K562 (cell line): ENCODE measurements at regions of chr1 and their contacts with region 1.

Region 1: GRCh38 chr1:197180252-197180878 is 33.9 kb upstream of the ASPM start:
- DNase-seq: peak; percentile 27 to 56 (median 42)
- ATAC-seq: peak; percentile 88
- H3K4me3 ChIP-seq: no peak overlapping the region
- H3K27ac ChIP-seq: no peak overlapping the region
- H3K4me1 ChIP-seq: peaks cover 3 to 4% of the 10 kb centered on the region in 2 experiments; a peak in 2 of 5 replicates
- H3K27me3 ChIP-seq: no peaks in the 10 kb centered on the region
- CTCF ChIP-seq: peak; percentile 48 to 82 (median 63); a peak in 5 of 6 replicates
- EP300 ChIP-seq: no peak
- POLR2A ChIP-seq: no peak
- RAD21 ChIP-seq: peak; percentile 88 to 90

Region 2: GRCh38 chr1:196723322-196724185 is 456.8 kb before region 1 on chr1:
- CTCF ChIA-PET with region 1: no interaction called
- POLR2A ChIA-PET with region 1: no interaction called
- in situ Hi-C with region 1: no loop called
- intact Hi-C with region 1: loop called (anchors 5 kb)
- DNase-seq: peak; percentile 29 to 77 (median 38)
- ATAC-seq: peak; percentile 97
- H3K4me3 ChIP-seq: no peak overlapping the region
- H3K27ac ChIP-seq: no peak overlapping the region
- H3K4me1 ChIP-seq: no peaks in the 10 kb centered on the region
- H3K27me3 ChIP-seq: no peaks in the 10 kb centered on the region
- CTCF ChIP-seq: peak; percentile 66 to 85 (median 82)
- EP300 ChIP-seq: no peak
- POLR2A ChIP-seq: no peak
- RAD21 ChIP-seq: peak in 1 of 2 experiments; percentile 79; a peak in 3 of 4 replicates

Region 3: DNA sequence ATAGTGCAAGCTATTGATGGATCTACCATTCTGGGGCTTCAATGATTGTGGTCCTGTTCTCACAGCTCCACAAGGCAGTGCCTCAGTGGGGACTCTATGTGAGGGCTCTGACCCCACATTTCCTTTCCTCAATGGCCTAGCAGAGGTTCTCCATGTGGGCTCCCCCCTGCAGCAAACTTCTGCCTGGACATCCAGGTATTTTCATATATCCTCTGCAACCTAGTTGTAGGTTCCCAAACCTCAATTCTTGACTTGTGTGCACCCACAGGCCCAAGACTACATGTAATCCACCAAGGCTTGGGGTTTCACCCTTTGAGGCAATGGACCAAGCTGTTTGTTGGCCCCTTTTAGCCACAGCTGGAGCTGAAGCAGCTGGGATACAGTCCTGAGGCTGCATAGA is 441.6 kb before region 1 on chr1:
- CTCF ChIA-PET with region 1: no interaction called
- POLR2A ChIA-PET with region 1: no interaction called
- in situ Hi-C with region 1: no loop called
- intact Hi-C with region 1: loop called (anchors 5 kb)
- DNase-seq: no peak
- ATAC-seq: no peak
- H3K4me3 ChIP-seq: no peak overlapping the region
- H3K27ac ChIP-seq: no peak overlapping the region
- H3K4me1 ChIP-seq: no peaks in the 10 kb centered on the region
- H3K27me3 ChIP-seq: no peaks in the 10 kb centered on the region
- CTCF ChIP-seq: no peak
- EP300 ChIP-seq: no peak
- POLR2A ChIP-seq: no peak
- RAD21 ChIP-seq: no peak

Region 4: GRCh38 chr1:197210426-197210825 is 30.1 kb after region 1 on chr1:
- CTCF ChIA-PET with region 1: no interaction called
- POLR2A ChIA-PET with region 1: no interaction called
- in situ Hi-C with region 1: no loop called
- intact Hi-C with region 1: no loop called
- DNase-seq: no peak
- ATAC-seq: no peak
- H3K4me3 ChIP-seq: no peak overlapping the region
- H3K27ac ChIP-seq: no peak overlapping the region
- H3K4me1 ChIP-seq: peaks cover 0 to 9% of the 10 kb centered on the region in 2 experiments; a peak in 2 of 5 replicates
- H3K27me3 ChIP-seq: no peaks in the 10 kb centered on the region
- CTCF ChIP-seq: no peak
- EP300 ChIP-seq: no peak
- POLR2A ChIP-seq: no peak
- RAD21 ChIP-seq: no peak

Region 5: GRCh38 chr1:197327776-197328364 is 147.5 kb after region 1 on chr1:
- CTCF ChIA-PET with region 1: no interaction called
- POLR2A ChIA-PET with region 1: no interaction called
- in situ Hi-C with region 1: no loop called
- intact Hi-C with region 1: loop called (anchors 2 kb)
- DNase-seq: no peak
- ATAC-seq: peak; percentile 75; the same call in 2 of the 3 replicates
- H3K4me3 ChIP-seq: no peak overlapping the region
- H3K27ac ChIP-seq: no peak overlapping the region
- H3K4me1 ChIP-seq: no peaks in the 10 kb centered on the region
- H3K27me3 ChIP-seq: no peaks in the 10 kb centered on the region
- CTCF ChIP-seq: peak; percentile 32 to 65 (median 56); a peak in 5 of 6 replicates
- EP300 ChIP-seq: no peak
- POLR2A ChIP-seq: no peak
- RAD21 ChIP-seq: peak; percentile 63 to 74